HepG2 (cell line): ENCODE measurements at regions of chr1 and their contacts with region 1.

Region 1: GRCh38 chr1:9438431-9439073 is 100.7 kb upstream of the SLC25A33 start:
- DNase-seq: peak; percentile 91
- ATAC-seq: peak; percentile 59
- H3K4me3 ChIP-seq: peak overlapping the region; percentile 29 to 64 (median 30)
- H3K27ac ChIP-seq: peak overlapping the region; percentile 88
- H3K4me1 ChIP-seq: peaks cover 100% of the 10 kb centered on the region
- H3K27me3 ChIP-seq: no peaks in the 10 kb centered on the region
- CTCF ChIP-seq: no peak
- EP300 ChIP-seq: peak; percentile 52 to 64; a peak in 2 of 4 replicates
- POLR2A ChIP-seq: peak; percentile 49 to 51; a peak in 2 of 4 replicates
- RAD21 ChIP-seq: no peak

Region 2: DNA sequence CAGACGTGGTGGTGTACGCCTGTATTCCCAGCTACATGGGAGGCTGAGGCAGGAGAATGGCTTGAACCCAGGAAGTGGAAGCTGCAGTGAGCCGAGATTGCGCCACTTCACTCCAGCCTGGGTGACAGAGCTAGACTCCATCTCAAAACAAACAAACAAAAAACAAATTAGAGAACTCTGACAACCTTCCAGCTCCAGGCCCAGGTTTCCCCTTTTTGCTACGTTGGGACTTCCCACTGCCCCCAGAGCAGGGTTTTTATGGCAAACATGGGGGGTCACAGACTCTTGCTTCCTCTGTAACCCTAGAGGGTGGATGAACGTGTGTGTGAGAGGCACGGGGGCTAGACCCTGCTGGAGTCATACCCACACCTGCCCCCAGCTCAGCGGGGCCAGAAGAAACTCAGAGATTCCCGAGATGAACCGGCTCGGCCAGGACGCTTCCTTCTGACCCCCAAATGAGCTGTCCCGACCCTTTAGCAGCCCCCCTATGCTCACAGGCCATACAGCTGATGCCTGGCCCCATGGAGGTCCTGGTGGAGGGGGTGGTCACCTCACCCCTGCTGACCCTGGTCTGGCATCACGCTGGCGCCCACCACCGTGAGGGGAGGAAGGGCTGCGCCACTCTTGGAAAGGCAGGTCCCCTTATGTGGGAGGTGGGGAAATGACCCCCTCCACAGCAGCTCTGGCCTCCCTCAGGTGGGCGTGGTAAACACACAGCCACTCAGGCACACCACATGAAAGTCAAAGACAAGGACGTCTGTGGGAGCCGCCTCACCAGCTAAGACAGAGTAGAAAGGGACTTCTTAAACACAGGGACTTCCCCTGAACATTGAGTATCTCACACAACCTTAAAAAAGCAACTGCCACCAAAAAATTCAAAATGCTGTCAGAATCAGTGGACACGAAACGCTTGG is 316.8 kb before region 1 on chr1:
- CTCF ChIA-PET with region 1: no interaction called
- POLR2A ChIA-PET with region 1: no interaction called
- in situ Hi-C with region 1: no loop called
- intact Hi-C with region 1: no loop called
- DNase-seq: no peak
- ATAC-seq: no peak
- H3K4me3 ChIP-seq: no peak overlapping the region
- H3K27ac ChIP-seq: no peak overlapping the region
- H3K4me1 ChIP-seq: peaks cover 48% of the 10 kb centered on the region
- H3K27me3 ChIP-seq: no peaks in the 10 kb centered on the region
- CTCF ChIP-seq: no peak
- EP300 ChIP-seq: no peak
- POLR2A ChIP-seq: no peak
- RAD21 ChIP-seq: no peak

Region 3: DNA sequence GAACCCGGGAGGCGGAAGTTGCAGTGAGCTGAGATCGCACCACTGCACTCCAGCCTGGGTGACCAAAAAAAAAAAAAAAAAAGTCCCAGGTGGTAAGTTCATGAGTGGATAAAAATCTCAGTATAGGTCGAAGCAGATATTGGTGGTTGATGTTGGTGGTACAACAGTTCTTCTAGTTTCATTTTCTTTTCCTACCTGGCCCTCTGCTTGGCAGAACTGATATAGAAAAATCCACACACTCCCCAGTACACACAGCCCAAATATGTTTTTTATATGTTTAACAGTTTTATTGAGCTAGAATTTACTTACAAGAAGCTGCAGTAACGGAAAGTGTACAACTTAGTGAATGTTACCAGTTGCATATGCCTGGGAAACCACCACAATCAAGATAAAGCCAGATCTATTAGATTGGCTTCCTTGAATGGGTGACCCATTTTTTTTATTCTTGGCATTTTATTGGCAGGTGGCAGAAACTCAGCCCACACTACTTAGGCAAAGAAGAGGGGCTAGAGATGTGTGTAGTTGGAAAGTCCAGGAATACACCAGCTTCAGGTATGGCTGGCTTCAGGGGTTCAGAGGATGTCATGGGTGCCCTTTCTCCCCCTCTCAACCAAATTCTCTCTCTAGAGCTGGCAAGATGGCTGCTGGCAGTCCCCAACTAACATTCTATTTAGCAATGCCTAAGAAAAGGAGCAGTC is 17.6 kb before region 1 on chr1:
- CTCF ChIA-PET with region 1: no interaction called
- POLR2A ChIA-PET with region 1: interaction called, 13 read pairs
- in situ Hi-C with region 1: no loop called
- intact Hi-C with region 1: no loop called
- DNase-seq: no peak
- ATAC-seq: no peak
- H3K4me3 ChIP-seq: no peak overlapping the region
- H3K27ac ChIP-seq: no peak overlapping the region
- H3K4me1 ChIP-seq: peaks cover 37% of the 10 kb centered on the region
- H3K27me3 ChIP-seq: peaks cover 2 to 30% of the 10 kb centered on the region in 2 experiments; a peak in 2 of 5 replicates
- CTCF ChIP-seq: no peak
- EP300 ChIP-seq: no peak
- POLR2A ChIP-seq: no peak
- RAD21 ChIP-seq: no peak

Region 4: GRCh38 chr1:9643351-9644256 is 205.1 kb after region 1 on chr1:
- CTCF ChIA-PET with region 1: no interaction called
- POLR2A ChIA-PET with region 1: no interaction called
- in situ Hi-C with region 1: no loop called
- intact Hi-C with region 1: no loop called
- DNase-seq: no peak
- ATAC-seq: no peak
- H3K4me3 ChIP-seq: no peak overlapping the region
- H3K27ac ChIP-seq: no peak overlapping the region
- H3K4me1 ChIP-seq: no peaks in the 10 kb centered on the region
- H3K27me3 ChIP-seq: peaks cover 0 to 32% of the 10 kb centered on the region in 2 experiments; a peak in 4 of 5 replicates
- CTCF ChIP-seq: no peak
- EP300 ChIP-seq: no peak
- POLR2A ChIP-seq: no peak
- RAD21 ChIP-seq: no peak